ENCODE measurements at regions of chr4 and their contacts with region 1.

Region 1: GRCh38 chr4:26947318-26947717 is 86.7 kb downstream of the STIM2 start:
- H3K4me3 Mint-ChIP-seq: no peak overlapping the region
- H3K27ac Mint-ChIP-seq: no peak overlapping the region
- H3K4me1 Mint-ChIP-seq: peaks cover 6% of the 10 kb centered on the region
- H3K27me3 Mint-ChIP-seq: no peaks in the 10 kb centered on the region

Region 2: GRCh38 chr4:26779674-26780073 is 167.6 kb before region 1 on chr4:
- intact Hi-C with region 1: no loop called
- H3K4me3 Mint-ChIP-seq: no peak overlapping the region
- H3K27ac Mint-ChIP-seq: no peak overlapping the region
- H3K4me1 Mint-ChIP-seq: no peaks in the 10 kb centered on the region
- H3K27me3 Mint-ChIP-seq: no peaks in the 10 kb centered on the region

Region 3: DNA sequence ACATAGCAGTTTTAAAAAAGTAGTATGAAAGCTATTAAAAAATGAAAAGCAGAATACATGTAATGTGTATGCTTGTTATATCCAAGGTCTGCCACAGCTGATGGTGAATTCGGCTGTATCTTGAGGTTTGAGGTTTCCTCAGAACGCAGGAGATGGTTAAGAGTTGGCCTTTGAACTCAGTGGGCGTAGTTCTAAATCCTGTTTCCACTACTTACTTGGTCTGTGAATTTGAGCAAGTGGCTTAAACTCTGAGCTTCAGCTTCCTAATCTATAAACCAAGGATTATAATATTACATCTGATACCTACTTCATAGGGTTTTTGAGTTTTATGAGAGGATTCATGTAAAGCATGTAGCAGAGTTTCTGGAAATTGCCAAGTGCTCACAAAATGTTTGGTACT is 38.6 kb after region 1 on chr4:
- intact Hi-C with region 1: loop called (anchors 5 kb)
- H3K4me3 Mint-ChIP-seq: no peak overlapping the region
- H3K27ac Mint-ChIP-seq: no peak overlapping the region
- H3K4me1 Mint-ChIP-seq: peaks cover 36% of the 10 kb centered on the region
- H3K27me3 Mint-ChIP-seq: no peaks in the 10 kb centered on the region

Region 4: GRCh38 chr4:27084685-27085361 is 137.5 kb after region 1 on chr4:
- intact Hi-C with region 1: no loop called
- H3K4me3 Mint-ChIP-seq: peak overlapping the region; percentile 45
- H3K27ac Mint-ChIP-seq: no peak overlapping the region
- H3K4me1 Mint-ChIP-seq: peaks cover 82% of the 10 kb centered on the region
- H3K27me3 Mint-ChIP-seq: peaks cover 64% of the 10 kb centered on the region